Endothelial cell of umbilical vein (primary cell): ENCODE measurements at regions of chr3 and their contacts with region 1.

Region 1: DNA sequence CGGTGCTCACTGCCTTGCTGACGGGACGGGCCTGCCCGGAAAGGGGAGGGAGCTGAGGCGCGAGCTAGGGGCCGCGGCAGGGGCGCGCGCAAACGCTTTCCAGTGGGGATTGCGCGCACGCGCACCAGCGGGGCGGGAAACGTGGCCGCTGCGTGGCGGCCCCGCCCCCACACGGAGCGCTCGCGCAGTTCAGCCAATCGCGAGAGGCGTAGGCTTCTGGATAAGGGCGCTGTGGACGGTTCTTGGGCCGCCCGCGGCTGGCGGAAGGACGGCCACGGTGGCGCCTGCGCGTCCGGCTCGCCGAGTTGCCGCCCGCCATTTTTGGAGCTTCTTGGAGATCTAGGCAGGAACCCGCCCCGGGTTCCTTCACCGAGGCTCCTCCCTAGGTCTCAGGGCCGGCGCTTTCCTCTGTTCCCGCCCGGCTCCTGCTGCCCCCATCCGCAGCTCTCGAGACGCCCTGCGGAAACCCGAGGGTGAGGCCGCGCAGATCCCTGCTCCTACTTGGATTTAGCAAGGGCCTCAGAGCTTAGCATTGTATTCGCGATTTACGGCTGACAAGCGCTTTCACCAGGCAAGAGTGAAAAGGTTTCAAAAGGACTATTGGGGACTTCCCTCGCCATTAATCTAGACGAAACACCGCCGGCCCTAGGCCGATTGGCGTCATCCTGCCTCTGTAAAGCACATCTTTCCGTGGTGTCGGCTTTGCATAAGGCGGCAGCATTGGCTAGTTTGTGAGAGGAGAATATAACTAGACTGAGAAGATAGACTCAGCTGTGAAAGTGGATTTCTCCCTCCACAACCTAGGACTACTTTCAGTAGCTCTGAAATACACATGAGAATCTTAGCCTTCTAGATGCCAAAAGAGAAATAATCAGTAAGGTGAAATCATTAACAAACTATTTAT is 496 bp upstream of the STAG1 start:
- DNase-seq: peak; percentile 99
- H3K4me3 ChIP-seq: peak overlapping the region; percentile 80 to 82 (median 82)
- H3K27ac ChIP-seq: peak overlapping the region; percentile 99
- H3K4me1 ChIP-seq: peaks cover 19% of the 10 kb centered on the region
- H3K27me3 ChIP-seq: no peaks in the 10 kb centered on the region
- CTCF ChIP-seq: peak in 1 of 2 donors; percentile 96
- POLR2A ChIP-seq: peak; percentile 84

Region 2: DNA sequence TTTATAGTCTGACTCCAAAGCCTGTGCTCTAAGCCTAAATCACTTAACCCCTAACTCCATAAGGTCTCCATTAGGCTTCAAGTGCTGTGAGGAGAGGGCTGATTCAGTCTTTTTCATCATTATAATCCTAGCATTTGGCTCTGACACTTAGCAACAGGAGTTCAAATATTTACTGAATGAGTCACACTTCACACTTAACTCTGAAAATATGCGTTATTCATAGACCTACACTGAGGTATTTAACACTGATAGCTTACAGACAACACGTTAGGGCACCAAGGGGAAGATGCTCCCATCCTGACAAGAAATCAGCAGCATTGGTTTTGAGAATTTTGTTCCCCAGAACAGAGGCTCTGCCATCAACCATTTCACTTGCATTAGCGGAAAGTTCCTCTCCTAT is 610.1 kb before region 1 on chr3:
- CTCF ChIA-PET with region 1: interaction called, 5 read pairs
- POLR2A ChIA-PET with region 1: no interaction called
- dilution Hi-C with region 1: no loop called
- intact Hi-C with region 1: loop called (anchors 5 kb)
- DNase-seq: peak; percentile 87
- H3K4me3 ChIP-seq: no peak overlapping the region
- H3K27ac ChIP-seq: peak overlapping the region; percentile 81
- H3K4me1 ChIP-seq: peaks cover 18% of the 10 kb centered on the region
- H3K27me3 ChIP-seq: no peaks in the 10 kb centered on the region
- CTCF ChIP-seq: no peak
- POLR2A ChIP-seq: no peak

Region 3: DNA sequence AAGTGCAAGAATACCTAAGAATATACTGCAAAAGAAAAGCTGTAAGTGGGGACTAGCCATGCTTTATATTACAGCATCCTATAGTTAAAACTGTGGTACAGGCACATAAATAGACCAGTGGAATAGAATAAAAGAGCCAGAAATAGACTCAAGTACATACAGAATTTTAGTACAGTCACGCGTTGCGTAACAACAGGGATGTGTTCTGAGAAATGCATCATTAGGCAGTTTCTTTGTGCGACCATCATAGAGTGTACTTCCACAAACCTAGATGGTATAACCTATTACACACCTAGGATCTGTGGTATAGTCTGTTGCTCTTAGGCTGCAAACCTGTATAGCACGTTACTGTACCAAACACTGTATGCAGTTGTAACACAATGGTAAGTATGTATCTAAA is 440.7 kb before region 1 on chr3:
- CTCF ChIA-PET with region 1: interaction called, 138 read pairs
- POLR2A ChIA-PET with region 1: interaction called, 3 read pairs
- dilution Hi-C with region 1: no loop called
- intact Hi-C with region 1: no loop called
- DNase-seq: no peak
- H3K4me3 ChIP-seq: no peak overlapping the region
- H3K27ac ChIP-seq: no peak overlapping the region
- H3K4me1 ChIP-seq: no peaks in the 10 kb centered on the region
- H3K27me3 ChIP-seq: no peaks in the 10 kb centered on the region
- CTCF ChIP-seq: no peak
- POLR2A ChIP-seq: no peak

Region 4: DNA sequence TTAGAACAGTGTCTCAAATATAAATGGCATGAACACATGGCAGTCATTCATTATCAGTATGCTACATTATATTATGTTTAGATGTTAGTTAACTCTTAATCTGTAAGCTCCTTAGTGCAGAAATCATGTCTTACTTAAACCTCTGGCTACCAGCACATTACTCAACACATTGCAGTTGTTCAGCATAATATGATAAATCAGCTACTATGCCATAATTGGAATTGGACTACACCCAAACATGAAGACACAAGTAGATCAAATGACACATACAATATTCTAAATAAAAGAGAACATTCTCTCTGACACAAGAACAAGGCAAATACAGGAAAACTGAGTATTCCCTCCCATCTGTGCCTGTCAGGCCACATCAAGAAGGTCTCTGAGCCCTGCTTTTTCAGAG is 386.4 kb before region 1 on chr3:
- CTCF ChIA-PET with region 1: interaction called, 14 read pairs
- POLR2A ChIA-PET with region 1: no interaction called
- dilution Hi-C with region 1: no loop called
- intact Hi-C with region 1: no loop called
- DNase-seq: no peak
- H3K4me3 ChIP-seq: no peak overlapping the region
- H3K27ac ChIP-seq: no peak overlapping the region
- H3K4me1 ChIP-seq: no peaks in the 10 kb centered on the region
- H3K27me3 ChIP-seq: no peaks in the 10 kb centered on the region
- CTCF ChIP-seq: no peak
- POLR2A ChIP-seq: no peak

Region 5: GRCh38 chr3:136545664-136546268 is 206.9 kb before region 1 on chr3:
- CTCF ChIA-PET with region 1: interaction called, 164 read pairs
- POLR2A ChIA-PET with region 1: interaction called, 8 read pairs
- dilution Hi-C with region 1: no loop called
- intact Hi-C with region 1: loop called (anchors 1 kb)
- DNase-seq: peak; percentile 40
- H3K4me3 ChIP-seq: no peak overlapping the region
- H3K27ac ChIP-seq: no peak overlapping the region
- H3K4me1 ChIP-seq: peaks cover 26% of the 10 kb centered on the region
- H3K27me3 ChIP-seq: no peaks in the 10 kb centered on the region
- CTCF ChIP-seq: no peak
- POLR2A ChIP-seq: no peak

Region 6: DNA sequence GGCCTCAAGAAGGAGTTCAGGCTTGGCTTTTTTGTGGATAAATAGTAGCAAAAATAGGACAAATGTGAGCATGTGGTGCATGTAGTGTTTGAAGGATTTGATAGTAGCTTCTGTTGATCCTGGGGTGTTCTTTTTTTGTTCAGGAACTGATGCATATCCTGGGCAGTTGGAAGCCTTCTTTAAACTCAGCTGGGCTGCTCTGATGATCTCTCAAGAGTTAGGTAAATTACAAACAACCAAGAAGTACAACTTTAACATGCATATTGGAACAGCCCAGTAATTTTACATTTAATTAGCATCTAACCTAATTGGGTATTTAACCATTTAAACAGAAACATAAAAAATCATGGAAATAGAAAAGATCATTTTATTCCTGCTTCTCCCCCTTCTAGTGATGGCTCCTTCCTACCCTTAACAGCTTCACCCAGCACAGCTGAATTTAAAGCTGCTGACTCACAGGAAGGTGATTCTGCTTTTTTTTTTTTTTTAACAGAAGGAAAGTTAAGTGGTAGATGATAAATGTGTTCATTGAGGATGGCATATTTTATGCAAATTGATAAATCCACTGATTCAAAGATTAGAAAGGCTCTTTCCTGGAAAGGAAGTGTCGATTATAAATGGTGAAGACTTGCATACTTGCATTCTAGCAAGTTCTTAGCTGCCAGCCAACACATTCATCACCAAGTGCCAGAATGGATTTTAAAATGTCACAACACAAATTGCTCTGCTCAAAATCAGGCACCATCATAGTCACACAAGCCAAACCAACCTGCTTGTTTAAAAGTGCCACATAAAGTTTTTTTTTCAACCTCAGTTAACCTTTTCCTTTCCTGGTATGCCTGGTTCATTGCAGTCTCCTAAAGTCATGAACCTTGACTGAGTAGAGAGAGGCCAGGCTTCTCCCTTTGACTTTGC is 86.2 kb after region 1 on chr3:
- CTCF ChIA-PET with region 1: interaction called, 18 read pairs
- POLR2A ChIA-PET with region 1: no interaction called
- dilution Hi-C with region 1: no loop called
- intact Hi-C with region 1: loop called (anchors 2 kb)
- DNase-seq: peak; percentile 88
- H3K4me3 ChIP-seq: peak overlapping the region in 1 of 3 experiments; percentile 33
- H3K27ac ChIP-seq: peak overlapping the region; percentile 86
- H3K4me1 ChIP-seq: peaks cover 54% of the 10 kb centered on the region
- H3K27me3 ChIP-seq: no peaks in the 10 kb centered on the region
- CTCF ChIP-seq: no peak
- POLR2A ChIP-seq: peak; percentile 25

Region 7: GRCh38 chr3:137013955-137014688 is 261.4 kb after region 1 on chr3:
- CTCF ChIA-PET with region 1: interaction called, 168 read pairs
- POLR2A ChIA-PET with region 1: interaction called, 6 read pairs
- dilution Hi-C with region 1: no loop called
- intact Hi-C with region 1: loop called (anchors 1 kb)
- DNase-seq: peak; percentile 92
- H3K4me3 ChIP-seq: peak overlapping the region; percentile 39 to 87 (median 58)
- H3K27ac ChIP-seq: peak overlapping the region; percentile 50
- H3K4me1 ChIP-seq: peaks cover 8% of the 10 kb centered on the region
- H3K27me3 ChIP-seq: no peaks in the 10 kb centered on the region
- CTCF ChIP-seq: peak; percentile 71 to 74
- POLR2A ChIP-seq: no peak